MCF 10A (cell line): ENCODE measurements at regions of chr14 and their contacts with region 1.

Region 1: DNA sequence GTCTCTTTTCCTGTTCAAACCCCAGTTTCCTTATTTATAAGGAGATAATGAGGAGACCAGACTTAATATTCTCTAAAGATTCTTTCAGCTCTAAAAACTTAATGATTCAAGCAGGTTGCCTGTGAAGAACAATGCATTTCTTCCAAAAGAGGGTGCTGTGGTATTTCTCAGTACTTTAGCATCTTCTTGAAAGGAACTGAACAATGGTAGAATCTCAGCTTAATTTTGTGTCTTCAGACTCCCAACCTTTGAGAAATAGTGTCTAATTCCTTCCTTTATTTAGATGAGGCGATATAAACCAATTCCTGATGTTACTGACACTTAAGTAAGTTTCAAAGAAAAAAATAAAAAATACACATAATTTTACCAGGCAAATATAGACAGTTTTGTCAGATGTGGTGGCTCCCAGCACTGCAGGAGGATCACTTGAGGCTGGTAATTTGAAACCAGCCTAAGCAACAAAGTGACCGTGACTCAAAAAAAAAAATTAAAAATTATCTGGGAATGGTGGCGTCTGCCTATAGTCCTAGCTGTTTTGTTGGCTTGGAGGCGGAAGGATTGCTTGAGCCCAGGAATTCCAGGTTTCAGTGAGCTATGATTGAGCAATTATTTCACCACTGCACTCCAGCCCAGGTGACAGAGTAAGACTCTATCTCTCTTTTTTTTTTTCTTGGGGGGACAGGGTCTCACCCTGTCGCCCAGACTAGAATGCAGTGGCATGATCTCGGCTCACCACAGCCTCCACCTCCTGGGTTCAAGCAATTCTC is 76.9 kb upstream of the PSMA6 start:
- DNase-seq: peak; percentile 61
- H3K4me3 Mint-ChIP-seq: no peak overlapping the region
- H3K27ac Mint-ChIP-seq: peak overlapping the region; percentile 75
- H3K4me1 Mint-ChIP-seq: peaks cover 30% of the 10 kb centered on the region
- H3K27me3 Mint-ChIP-seq: no peaks in the 10 kb centered on the region
- CTCF ChIP-seq: peak; percentile 24

Region 2: GRCh38 chr14:35121887-35122695 is 93.2 kb before region 1 on chr14 and contains the starts of genes PPP2R3C and PRORP:
- CTCF ChIA-PET with region 1: interaction called, 3 read pairs
- POLR2A ChIA-PET with region 1: interaction called, 32 read pairs
- intact Hi-C with region 1: loop called (anchors 1 kb)
- DNase-seq: peak; percentile 99
- H3K4me3 Mint-ChIP-seq: peak within 1 kb of the TSS; percentile 98
- H3K27ac Mint-ChIP-seq: peak within 1 kb of the TSS; percentile 100
- H3K4me1 Mint-ChIP-seq: peaks cover 31% of the 10 kb centered on the region
- H3K27me3 Mint-ChIP-seq: no peaks in the 10 kb centered on the region
- CTCF ChIP-seq: no peak
- total RNA-seq, gene PPP2R3C: 16.9 and 21.6 TPM in 2 replicates
- total RNA-seq, gene PRORP: 27.9 and 30.5 TPM in 2 replicates

Region 3: GRCh38 chr14:35159742-35160409 is 55.4 kb before region 1 on chr14:
- CTCF ChIA-PET with region 1: interaction called, 4 read pairs
- POLR2A ChIA-PET with region 1: interaction called, 32 read pairs
- intact Hi-C with region 1: loop called (anchors 1 kb)
- DNase-seq: peak; percentile 92
- H3K4me3 Mint-ChIP-seq: peak overlapping the region; percentile 52
- H3K27ac Mint-ChIP-seq: peak overlapping the region; percentile 96
- H3K4me1 Mint-ChIP-seq: peaks cover 48% of the 10 kb centered on the region
- H3K27me3 Mint-ChIP-seq: no peaks in the 10 kb centered on the region
- CTCF ChIP-seq: no peak

Region 4: DNA sequence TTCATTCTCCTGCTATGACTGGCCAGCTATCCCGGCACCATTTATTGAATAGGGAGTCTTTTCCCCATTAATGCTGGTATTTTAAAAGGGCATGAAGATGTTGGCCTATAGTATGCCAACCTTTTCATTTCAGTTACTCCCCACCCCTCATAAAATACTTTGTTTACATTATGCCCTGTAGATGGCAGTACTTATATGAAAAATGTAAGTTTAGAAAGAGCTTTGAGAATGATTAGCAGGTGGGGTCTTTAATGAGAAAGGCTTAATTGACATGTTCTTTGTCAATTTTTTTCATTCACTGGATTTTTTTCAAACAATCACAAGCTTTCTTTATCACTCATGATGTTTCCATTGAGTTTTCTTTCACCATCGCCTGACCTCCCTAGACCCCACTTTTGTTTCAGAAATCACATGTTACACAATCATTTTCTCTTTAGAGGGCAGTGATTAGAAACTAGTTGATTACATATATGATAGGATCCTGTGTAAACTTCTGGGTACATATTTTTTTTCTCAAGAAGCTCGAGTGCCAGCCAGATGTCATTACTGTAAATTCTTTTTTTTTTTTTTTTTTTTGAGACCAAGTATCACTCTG is 14.3 kb after region 1 on chr14:
- CTCF ChIA-PET with region 1: interaction called, 28 read pairs
- POLR2A ChIA-PET with region 1: interaction called, 16 read pairs
- intact Hi-C with region 1: no loop called
- DNase-seq: peak; percentile 24
- H3K4me3 Mint-ChIP-seq: no peak overlapping the region
- H3K27ac Mint-ChIP-seq: peak overlapping the region; percentile 35
- H3K4me1 Mint-ChIP-seq: peaks cover 23% of the 10 kb centered on the region
- H3K27me3 Mint-ChIP-seq: no peaks in the 10 kb centered on the region
- CTCF ChIP-seq: peak; percentile 34